ENCODE measurements at regions of chr11 and their contacts with region 1.

Region 1: GRCh38 chr11:64778508-64779346 is at the start of gene SF1:
- DNase-seq: peak; percentile 95
- ATAC-seq: peak; percentile 89
- H3K4me3 Mint-ChIP-seq: peak within 1 kb of the TSS; percentile 88
- H3K27ac Mint-ChIP-seq: peak within 1 kb of the TSS; percentile 97
- H3K4me1 Mint-ChIP-seq: peaks cover 47% of the 10 kb centered on the region
- H3K27me3 Mint-ChIP-seq: no peaks in the 10 kb centered on the region
- total RNA-seq, gene SF1: 519 to 524 TPM

Region 2: GRCh38 chr11:64644647-64645275 is 134.0 kb before region 1 on chr11:
- POLR2A ChIA-PET with region 1: no interaction called
- DNase-seq: no peak
- ATAC-seq: peak; percentile 57
- H3K4me3 Mint-ChIP-seq: no peak overlapping the region
- H3K27ac Mint-ChIP-seq: no peak overlapping the region
- H3K4me1 Mint-ChIP-seq: peaks cover 4% of the 10 kb centered on the region
- H3K27me3 Mint-ChIP-seq: peaks cover 29% of the 10 kb centered on the region

Region 3: GRCh38 chr11:64654958-64655541 is 123.7 kb before region 1 on chr11:
- POLR2A ChIA-PET with region 1: no interaction called
- DNase-seq: no peak
- ATAC-seq: no peak
- H3K4me3 Mint-ChIP-seq: no peak overlapping the region
- H3K27ac Mint-ChIP-seq: no peak overlapping the region
- H3K4me1 Mint-ChIP-seq: peaks cover 4% of the 10 kb centered on the region
- H3K27me3 Mint-ChIP-seq: peaks cover 8% of the 10 kb centered on the region

Region 4: DNA sequence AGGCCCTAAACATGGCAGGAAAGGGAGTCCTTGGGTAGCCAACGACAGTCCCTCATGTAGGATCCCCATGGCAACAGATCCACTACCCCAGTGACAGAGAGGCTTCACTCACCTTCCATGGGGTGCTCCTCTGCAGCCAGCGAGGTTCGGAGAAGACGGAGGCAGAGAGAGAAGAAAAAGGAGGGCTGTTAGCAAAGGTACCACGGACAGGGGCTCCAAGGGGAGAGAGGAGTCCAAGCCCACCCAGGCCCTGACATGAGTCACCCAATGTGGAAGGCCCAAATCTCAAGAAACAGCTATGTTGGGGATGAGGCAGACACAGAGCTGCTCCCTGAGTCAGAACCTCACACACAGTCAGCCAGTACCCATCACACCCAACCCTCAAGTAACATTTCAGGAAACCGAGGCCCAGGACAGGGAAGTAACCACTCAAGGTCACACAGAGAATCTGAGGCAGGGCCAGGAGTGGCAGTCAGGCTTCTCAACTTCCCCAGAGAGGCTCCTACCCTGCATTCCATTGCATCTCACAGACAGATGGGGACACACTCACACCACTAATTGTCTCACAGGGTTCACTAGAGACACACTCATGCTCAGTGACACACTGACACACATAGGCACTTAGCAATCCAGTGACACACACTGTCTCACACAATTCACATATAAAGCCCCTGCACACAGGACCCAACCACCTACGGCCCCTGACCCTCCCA is 80.9 kb before region 1 on chr11:
- POLR2A ChIA-PET with region 1: no interaction called
- DNase-seq: no peak
- ATAC-seq: no peak
- H3K4me3 Mint-ChIP-seq: no peak overlapping the region
- H3K27ac Mint-ChIP-seq: no peak overlapping the region
- H3K4me1 Mint-ChIP-seq: peaks cover 1% of the 10 kb centered on the region
- H3K27me3 Mint-ChIP-seq: peaks cover 36% of the 10 kb centered on the region

Region 5: DNA sequence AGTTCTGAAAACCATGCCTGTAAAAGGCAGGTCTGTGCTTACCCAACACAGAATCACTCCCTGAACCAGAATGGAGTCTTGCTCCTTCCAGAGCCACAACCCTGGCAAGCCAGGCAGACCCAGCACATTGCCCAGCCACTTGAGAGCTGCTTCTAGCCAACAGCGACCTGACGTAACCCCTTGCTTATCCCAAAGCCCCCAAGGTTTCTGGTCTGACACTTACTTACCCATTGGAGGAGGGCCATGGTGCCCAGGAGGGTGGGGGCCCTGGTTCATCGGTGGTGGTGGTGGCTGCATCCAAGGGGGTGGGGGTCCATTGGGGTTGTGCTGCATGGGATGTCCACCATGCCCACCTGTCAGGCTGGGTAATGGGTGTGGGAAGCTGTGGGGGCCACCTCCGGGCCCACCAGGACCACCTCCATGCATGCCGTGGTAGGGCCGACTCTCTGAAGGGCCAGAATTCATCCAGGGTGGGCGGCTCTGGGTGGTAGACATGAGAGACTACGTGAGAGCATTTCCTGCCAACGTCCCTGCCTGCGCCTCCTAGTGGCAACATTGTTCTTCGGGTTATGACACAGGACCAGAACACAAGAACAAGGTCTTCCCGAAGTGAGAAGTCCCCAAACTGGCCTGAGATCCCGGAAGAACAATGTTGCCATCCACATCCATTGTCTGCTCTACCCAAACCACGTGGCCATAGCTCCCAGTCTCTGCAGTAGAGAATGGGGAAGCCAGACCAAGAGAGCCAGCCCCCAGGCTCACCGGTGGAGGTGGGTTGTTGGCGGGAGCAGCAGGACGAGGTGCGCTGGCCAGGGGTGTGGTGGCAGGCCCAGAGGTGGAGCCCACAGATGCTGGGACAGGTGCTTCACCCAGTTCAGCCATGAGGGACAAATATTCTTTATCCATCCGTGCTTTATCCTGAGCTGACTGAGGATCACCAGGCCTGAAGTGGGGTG is 11.1 kb before region 1 on chr11:
- POLR2A ChIA-PET with region 1: interaction called, 157 read pairs
- DNase-seq: peak; percentile 81
- ATAC-seq: peak; percentile 30
- H3K4me3 Mint-ChIP-seq: peak overlapping the region; percentile 39
- H3K27ac Mint-ChIP-seq: peak overlapping the region; percentile 70
- H3K4me1 Mint-ChIP-seq: peaks cover 67% of the 10 kb centered on the region
- H3K27me3 Mint-ChIP-seq: no peaks in the 10 kb centered on the region

Region 6: GRCh38 chr11:64793271-64794172 is 14.8 kb after region 1 on chr11:
- POLR2A ChIA-PET with region 1: interaction called, 12 read pairs
- DNase-seq: no peak
- ATAC-seq: peak; percentile 62
- H3K4me3 Mint-ChIP-seq: peak overlapping the region; percentile 35
- H3K27ac Mint-ChIP-seq: peak overlapping the region; percentile 96
- H3K4me1 Mint-ChIP-seq: peaks cover 30% of the 10 kb centered on the region
- H3K27me3 Mint-ChIP-seq: no peaks in the 10 kb centered on the region

Region 7: GRCh38 chr11:64803163-64803845 is 24.6 kb after region 1 on chr11 and contains the start of gene MAP4K2:
- POLR2A ChIA-PET with region 1: interaction called, 26 read pairs
- DNase-seq: peak; percentile 96
- ATAC-seq: peak; percentile 85
- H3K4me3 Mint-ChIP-seq: peak within 1 kb of the TSS; percentile 86
- H3K27ac Mint-ChIP-seq: peak within 1 kb of the TSS; percentile 82
- H3K4me1 Mint-ChIP-seq: peaks cover 25% of the 10 kb centered on the region
- H3K27me3 Mint-ChIP-seq: no peaks in the 10 kb centered on the region
- total RNA-seq, gene MAP4K2: 92.0 to 96.2 TPM

Region 8: GRCh38 chr11:64924102-64924851 is 145.6 kb after region 1 on chr11 and contains the start of gene PPP2R5B:
- POLR2A ChIA-PET with region 1: no interaction called
- DNase-seq: peak; percentile 90
- ATAC-seq: peak; percentile 93
- H3K4me3 Mint-ChIP-seq: peak within 1 kb of the TSS; percentile 97
- H3K27ac Mint-ChIP-seq: peak within 1 kb of the TSS; percentile 100
- H3K4me1 Mint-ChIP-seq: peaks cover 11% of the 10 kb centered on the region
- H3K27me3 Mint-ChIP-seq: no peaks in the 10 kb centered on the region
- total RNA-seq, gene PPP2R5B: 18.6 to 22.3 TPM

Measured in activated naive CD8-positive, alpha-beta T cell treated with anti-CD3 and anti-CD28 coated beads, Interleukin-2, amount 10 ng/mL, durations not matched to agents 7 days and 5 days (primary cell).